ENCODE measurements at regions of chr11 and their contacts with region 1.

Region 1: DNA sequence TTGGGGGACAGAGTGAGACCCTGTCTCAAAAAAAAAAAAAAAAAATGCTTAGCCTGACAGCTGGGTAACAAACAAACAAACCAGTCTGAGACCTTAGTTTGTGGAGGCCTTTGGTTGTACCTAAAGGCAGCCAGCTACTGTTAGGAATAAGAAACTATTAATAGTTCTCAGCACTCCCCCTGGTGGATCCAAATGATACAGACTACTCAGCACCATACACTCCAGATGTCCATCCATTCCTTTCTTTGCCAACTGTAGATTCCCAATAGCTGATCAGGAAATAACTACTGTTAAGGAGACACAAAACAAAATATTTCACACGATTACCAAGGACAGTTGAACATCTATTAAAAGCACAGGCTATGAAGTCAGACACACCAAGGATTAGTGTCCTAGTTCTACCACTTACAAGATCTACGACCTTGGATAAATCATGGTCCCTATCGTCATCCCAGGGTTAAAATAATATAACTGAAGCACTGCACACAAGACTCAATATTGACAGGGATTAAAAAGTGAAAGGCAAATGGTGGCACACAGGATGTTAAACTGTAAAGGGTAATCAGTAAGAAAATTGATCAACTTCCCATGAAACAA is 17.2 kb downstream of the CLDN25 start:
- DNase-seq: peak; percentile 55
- CTCF ChIP-seq: peak; percentile 52

Region 2: DNA sequence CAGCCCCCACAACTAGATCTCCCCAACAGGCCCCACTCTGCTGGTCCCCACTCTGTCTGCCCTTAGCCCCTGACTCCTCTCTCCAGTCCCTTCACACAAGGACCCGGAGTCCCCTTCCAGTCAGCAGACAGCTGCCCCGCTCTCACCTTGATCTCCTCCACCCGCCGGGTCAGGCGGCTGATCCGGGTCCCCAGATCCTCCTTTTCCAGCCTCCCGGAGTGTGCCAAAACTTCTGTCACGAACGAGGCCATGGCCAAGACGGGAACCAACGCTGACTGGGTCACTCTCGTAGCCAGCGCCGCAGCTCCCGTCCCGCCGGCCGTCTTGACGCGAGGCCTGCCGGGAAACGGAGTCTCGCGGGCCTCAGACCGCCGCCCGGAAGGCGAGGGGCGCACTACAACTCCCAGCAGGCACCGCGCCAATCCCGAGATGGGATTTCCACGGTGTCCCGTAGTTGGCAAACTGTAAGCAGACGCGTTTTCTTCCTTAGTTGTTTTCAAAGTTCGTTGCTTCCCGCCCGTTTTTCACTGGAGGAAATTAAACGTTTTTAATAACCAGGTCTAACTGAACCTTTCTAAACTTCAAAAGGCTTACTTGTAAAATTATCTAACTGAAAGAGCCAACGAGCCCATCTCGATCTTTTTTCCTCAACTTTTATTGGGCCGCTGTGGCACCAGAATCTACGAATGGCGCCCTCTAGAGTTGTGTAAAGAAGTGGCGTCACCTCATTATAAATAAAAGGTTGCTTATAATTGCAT is 23.2 kb before region 1 on chr11 and contains the start of gene ZW10:
- CTCF ChIA-PET with region 1: interaction called, 13 read pairs
- POLR2A ChIA-PET with region 1: no interaction called
- DNase-seq: peak; percentile 91
- CTCF ChIP-seq: peak; percentile 77

Region 3: DNA sequence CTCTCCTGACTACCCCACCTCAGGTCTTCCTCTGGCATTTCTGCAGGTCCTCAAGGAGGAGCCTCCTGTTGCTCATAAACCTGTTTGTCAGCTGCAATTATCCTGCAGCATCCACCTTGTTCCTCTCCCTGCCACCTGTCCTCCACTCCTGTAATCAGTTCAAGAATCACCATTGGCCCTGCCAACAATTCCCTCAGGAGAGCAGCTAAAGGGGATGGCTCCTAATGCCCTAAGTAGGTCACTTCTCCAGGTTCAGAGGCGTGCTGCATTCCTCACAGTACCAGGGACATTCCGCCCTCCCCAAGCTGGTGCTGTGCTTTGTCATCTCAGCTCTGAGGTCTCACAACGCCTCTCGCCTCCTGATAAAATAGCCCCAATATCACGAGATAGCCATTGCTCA is 15.1 kb before region 1 on chr11:
- CTCF ChIA-PET with region 1: interaction called, 17 read pairs
- POLR2A ChIA-PET with region 1: no interaction called
- DNase-seq: no peak
- CTCF ChIP-seq: no peak

Region 4: DNA sequence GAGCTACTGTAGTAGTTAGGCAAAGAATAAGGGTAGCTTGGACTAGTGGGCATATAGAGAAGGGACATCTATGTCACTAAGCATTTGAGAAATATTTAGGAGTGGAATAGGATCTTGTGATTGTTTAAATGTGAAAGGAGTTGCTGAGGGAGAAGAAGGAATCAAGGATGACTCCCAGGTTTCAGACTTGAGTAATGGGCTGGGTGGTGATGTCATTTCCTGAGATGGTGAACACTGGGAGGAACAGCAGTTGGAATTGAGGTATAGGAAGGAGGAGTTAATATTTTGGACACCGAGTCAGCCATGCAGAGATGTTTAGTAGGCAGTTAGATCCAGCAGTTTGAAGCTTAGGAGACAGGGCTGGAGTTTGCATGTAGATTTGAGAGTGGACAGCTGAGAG is 682.6 kb after region 1 on chr11:
- CTCF ChIA-PET with region 1: no interaction called
- POLR2A ChIA-PET with region 1: no interaction called
- DNase-seq: no peak
- CTCF ChIP-seq: no peak